CD4-positive, alpha-beta memory T cell (primary cell): ENCODE measurements at regions of chr13 and their contacts with region 1.

Region 1: DNA sequence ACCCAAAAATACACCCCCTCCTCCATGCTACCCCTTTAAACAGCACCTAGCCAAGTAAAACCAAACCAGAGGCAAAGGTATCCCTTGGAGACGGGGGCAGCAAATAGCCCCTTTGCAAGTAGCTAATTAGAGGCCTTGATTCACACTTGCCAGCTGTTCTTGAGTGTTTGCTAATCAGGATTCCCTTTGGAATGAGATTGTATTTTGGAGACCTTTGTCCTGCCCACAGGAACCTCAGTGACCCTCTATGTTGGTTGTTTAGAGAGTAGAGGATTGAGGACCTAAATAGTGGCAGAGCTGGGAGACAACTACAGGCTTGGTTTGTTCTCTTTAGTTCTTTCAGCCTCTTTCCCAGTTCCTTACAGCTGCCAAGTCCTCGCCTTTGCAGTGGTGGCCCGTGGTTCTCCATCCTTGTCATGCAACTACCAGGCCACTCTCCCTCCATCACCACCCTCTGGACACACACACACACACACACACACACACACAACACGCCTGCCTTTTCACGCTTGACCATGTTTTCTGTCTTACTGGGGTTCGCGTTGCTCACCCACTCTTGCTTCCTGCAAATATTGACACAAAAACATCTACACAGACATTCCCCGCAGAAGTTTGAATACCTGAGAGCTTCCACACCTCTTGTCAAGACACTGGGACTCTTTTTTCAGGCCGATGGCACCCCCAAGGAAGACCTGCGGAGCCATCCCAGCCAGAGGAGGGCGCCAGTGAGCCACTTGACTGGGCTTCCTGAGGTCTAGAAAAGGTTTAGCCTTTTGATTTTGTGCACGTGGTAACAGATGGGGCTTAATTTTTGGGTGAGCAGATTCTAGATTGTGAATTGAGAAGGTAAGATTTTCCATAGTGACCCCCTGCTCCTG is 80.0 kb upstream of the GPR183 start:
- DNase-seq: peak; percentile 78 to 84 (median 81)
- H3K4me3 ChIP-seq: no peak overlapping the region
- H3K4me3 Mint-ChIP-seq: peak overlapping the region; percentile 4 to 73 (median 54)
- H3K27ac ChIP-seq: peak overlapping the region; percentile 30
- H3K27ac Mint-ChIP-seq: peak overlapping the region; percentile 92 to 99 (median 96)
- H3K4me1 ChIP-seq: peaks cover 65% of the 10 kb centered on the region
- H3K4me1 Mint-ChIP-seq: peaks cover 46 to 70% (median 60%) of the 10 kb centered on the region in 4 donors
- H3K27me3 ChIP-seq: no peaks in the 10 kb centered on the region
- H3K27me3 Mint-ChIP-seq: no peaks in the 10 kb centered on the region

Region 2: GRCh38 chr13:99176309-99177276 is 210.6 kb before region 1 on chr13:
- CTCF ChIA-PET with region 1: interaction called, 16 read pairs
- POLR2A ChIA-PET with region 1: no interaction called
- intact Hi-C with region 1: loop called (anchors 5 kb)
- DNase-seq: peak; percentile 69 to 79 (median 75)
- H3K4me3 ChIP-seq: peak overlapping the region in 1 of 2 donors; percentile 19
- H3K4me3 Mint-ChIP-seq: peak overlapping the region in 7 of 8 donors; percentile 62 to 80 (median 71)
- H3K27ac ChIP-seq: no peak overlapping the region
- H3K27ac Mint-ChIP-seq: peak overlapping the region in 6 of 7 donors; percentile 37 to 81 (median 68)
- H3K4me1 ChIP-seq: peaks cover 44% of the 10 kb centered on the region
- H3K4me1 Mint-ChIP-seq: peaks cover 32 to 43% (median 36%) of the 10 kb centered on the region in 4 donors
- H3K27me3 ChIP-seq: no peaks in the 10 kb centered on the region
- H3K27me3 Mint-ChIP-seq: no peaks in the 10 kb centered on the region

Region 3: GRCh38 chr13:99191879-99192399 is 195.2 kb before region 1 on chr13:
- CTCF ChIA-PET with region 1: no interaction called
- POLR2A ChIA-PET with region 1: no interaction called
- intact Hi-C with region 1: no loop called
- DNase-seq: no peak
- H3K4me3 ChIP-seq: no peak overlapping the region
- H3K4me3 Mint-ChIP-seq: peak overlapping the region in 4 of 8 donors; percentile 1 to 54 (median 40)
- H3K27ac ChIP-seq: no peak overlapping the region
- H3K27ac Mint-ChIP-seq: peak overlapping the region in 6 of 7 donors; percentile 24 to 83 (median 59)
- H3K4me1 ChIP-seq: peaks cover 28% of the 10 kb centered on the region
- H3K4me1 Mint-ChIP-seq: peaks cover 16 to 36% (median 25%) of the 10 kb centered on the region in 4 donors
- H3K27me3 ChIP-seq: no peaks in the 10 kb centered on the region
- H3K27me3 Mint-ChIP-seq: no peaks in the 10 kb centered on the region

Region 4: DNA sequence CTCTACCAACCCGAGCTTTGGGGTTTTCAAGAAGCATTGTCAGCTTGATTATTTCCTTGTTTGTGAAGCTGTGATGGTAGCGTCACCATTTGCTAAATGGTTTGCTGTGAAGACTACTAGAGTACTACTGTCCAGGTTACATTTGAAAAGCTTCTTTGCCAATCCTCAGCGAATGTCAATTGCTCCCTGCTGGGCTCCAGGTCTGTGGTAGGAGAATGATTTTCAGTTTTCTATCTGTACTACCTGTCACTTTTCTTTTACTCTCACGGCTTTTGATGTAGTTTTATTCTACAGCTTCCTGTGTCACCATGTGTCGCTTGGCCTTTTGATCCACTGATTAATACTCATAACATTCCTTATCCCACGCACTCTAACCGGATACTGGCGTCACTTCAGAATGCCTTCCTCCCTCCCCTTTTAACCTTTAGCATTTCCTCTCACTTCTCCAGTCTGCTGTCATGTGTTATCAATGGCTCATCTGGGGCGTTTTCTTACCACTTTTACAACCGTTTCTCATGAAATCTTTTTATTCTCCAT is 72.4 kb before region 1 on chr13:
- CTCF ChIA-PET with region 1: interaction called, 142 read pairs
- POLR2A ChIA-PET with region 1: interaction called, 350 read pairs
- intact Hi-C with region 1: no loop called
- DNase-seq: peak; percentile 77 to 86 (median 83)
- H3K4me3 ChIP-seq: peak overlapping the region; percentile 26 to 46
- H3K4me3 Mint-ChIP-seq: peak overlapping the region; percentile 76 to 88 (median 80)
- H3K27ac ChIP-seq: peak overlapping the region; percentile 73
- H3K27ac Mint-ChIP-seq: peak overlapping the region; percentile 88 to 99 (median 98)
- H3K4me1 ChIP-seq: peaks cover 87% of the 10 kb centered on the region
- H3K4me1 Mint-ChIP-seq: peaks cover 61 to 86% (median 74%) of the 10 kb centered on the region in 4 donors
- H3K27me3 ChIP-seq: no peaks in the 10 kb centered on the region
- H3K27me3 Mint-ChIP-seq: no peaks in the 10 kb centered on the region

Region 5: DNA sequence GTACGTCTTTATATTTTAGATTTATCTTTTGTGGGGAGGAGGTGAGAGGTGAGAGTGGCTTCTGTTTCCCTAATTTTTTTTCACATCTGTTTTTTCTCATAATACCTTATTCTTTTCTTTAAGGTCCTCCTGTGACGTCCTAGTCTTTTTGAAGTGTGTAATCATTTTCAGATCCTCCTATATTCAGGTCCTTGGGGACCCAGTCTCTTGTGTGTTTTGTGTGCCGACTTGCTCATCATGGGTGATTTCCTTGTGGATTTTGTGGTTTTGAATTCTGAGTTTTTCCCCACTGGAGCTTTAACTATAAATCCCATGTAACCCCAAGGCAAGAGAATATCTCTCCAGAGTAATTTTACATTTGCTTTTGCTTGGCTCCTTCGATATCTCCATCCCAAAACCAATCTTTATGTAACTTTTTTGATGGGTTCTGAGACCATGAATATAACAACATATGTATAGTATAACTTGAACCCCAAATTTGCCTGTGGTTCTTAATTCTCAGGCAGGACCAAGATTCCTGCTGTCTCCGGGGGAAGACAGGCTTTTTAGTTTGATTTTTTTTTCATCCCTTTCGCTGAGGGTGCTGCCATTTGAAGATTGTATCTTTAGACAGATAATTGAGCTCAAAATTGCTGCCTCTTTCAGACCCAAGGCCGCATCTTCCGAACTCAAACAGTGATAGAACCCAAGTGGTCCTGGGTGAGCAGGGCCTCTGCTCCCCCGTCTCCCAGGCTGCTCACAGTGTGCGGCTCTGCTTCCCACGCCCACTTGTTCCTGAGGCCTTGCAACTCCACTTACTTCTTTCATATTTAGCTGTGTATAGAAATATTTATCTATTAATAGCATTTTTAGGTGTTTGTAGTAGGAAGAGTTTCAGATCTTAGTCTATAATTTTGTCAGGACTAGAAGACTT is 20.8 kb before region 1 on chr13:
- CTCF ChIA-PET with region 1: interaction called, 14 read pairs
- POLR2A ChIA-PET with region 1: interaction called, 112 read pairs
- intact Hi-C with region 1: no loop called
- DNase-seq: no peak
- H3K4me3 ChIP-seq: peak overlapping the region in 1 of 2 donors; percentile 22
- H3K4me3 Mint-ChIP-seq: peak overlapping the region; percentile 41 to 93 (median 78)
- H3K27ac ChIP-seq: peak overlapping the region; percentile 70
- H3K27ac Mint-ChIP-seq: peak overlapping the region; percentile 96 to 98 (median 97)
- H3K4me1 ChIP-seq: peaks cover 98% of the 10 kb centered on the region
- H3K4me1 Mint-ChIP-seq: peaks cover 73 to 98% (median 85%) of the 10 kb centered on the region in 4 donors
- H3K27me3 ChIP-seq: no peaks in the 10 kb centered on the region
- H3K27me3 Mint-ChIP-seq: no peaks in the 10 kb centered on the region

Region 6: GRCh38 chr13:99404005-99404755 is 17.0 kb after region 1 on chr13:
- CTCF ChIA-PET with region 1: interaction called, 11 read pairs
- POLR2A ChIA-PET with region 1: interaction called, 5 read pairs
- intact Hi-C with region 1: no loop called
- DNase-seq: no peak
- H3K4me3 ChIP-seq: no peak overlapping the region
- H3K4me3 Mint-ChIP-seq: peak overlapping the region in 6 of 8 donors; percentile 4 to 69 (median 34)
- H3K27ac ChIP-seq: no peak overlapping the region
- H3K27ac Mint-ChIP-seq: peak overlapping the region in 4 of 7 donors; percentile 30 to 70 (median 50)
- H3K4me1 ChIP-seq: peaks cover 7% of the 10 kb centered on the region
- H3K4me1 Mint-ChIP-seq: peaks cover 10 to 18% (median 14%) of the 10 kb centered on the region in 4 donors
- H3K27me3 ChIP-seq: no peaks in the 10 kb centered on the region
- H3K27me3 Mint-ChIP-seq: no peaks in the 10 kb centered on the region

Region 7: DNA sequence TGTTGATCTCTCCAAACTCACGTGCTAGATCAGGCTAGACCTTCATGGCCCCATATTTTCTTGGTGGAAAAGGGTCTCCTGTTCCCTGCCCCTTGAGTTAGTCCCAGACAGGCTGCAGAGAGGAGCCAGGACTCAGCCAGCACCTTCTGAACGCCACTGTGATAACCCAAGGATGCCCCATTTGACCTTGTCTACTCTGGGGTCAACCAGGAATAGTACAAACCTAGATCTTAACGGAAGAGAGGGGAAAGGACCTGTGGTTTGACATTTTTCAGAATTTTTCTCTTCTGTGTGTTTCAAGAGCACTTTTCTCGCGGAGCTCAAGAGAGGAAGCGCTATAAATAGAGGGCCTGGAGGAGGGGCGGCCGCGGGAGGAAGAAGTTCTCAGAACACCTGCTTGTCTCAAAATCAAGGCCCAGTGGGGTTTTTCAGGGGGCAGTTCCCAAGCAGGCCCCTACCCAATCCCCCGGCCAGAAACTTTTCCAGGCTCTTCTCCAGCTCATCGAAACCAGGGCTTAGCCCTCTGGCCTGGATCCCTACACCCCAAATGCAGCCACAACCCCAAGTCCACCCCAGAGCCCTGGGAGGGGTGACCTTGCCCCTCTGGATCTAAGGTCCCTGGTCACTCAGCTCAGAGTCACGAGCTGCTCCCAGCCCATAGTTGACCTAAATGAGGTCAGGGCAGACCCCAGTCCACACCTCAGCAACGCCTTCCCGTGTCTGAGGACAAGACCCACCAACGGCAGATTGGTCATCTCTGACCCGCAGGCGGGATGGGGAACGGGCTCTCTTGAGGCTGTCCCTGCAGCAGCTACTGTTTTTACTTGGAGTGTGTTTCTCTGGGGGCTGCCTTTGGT is 38.6 kb after region 1 on chr13:
- CTCF ChIA-PET with region 1: interaction called, 49 read pairs
- POLR2A ChIA-PET with region 1: interaction called, 9 read pairs
- intact Hi-C with region 1: no loop called
- DNase-seq: peak; percentile 41 to 67 (median 49)
- H3K4me3 ChIP-seq: peak overlapping the region; percentile 14 to 34
- H3K4me3 Mint-ChIP-seq: peak overlapping the region; percentile 23 to 88 (median 82)
- H3K27ac ChIP-seq: peak overlapping the region; percentile 60
- H3K27ac Mint-ChIP-seq: peak overlapping the region; percentile 90 to 96 (median 93)
- H3K4me1 ChIP-seq: peaks cover 42% of the 10 kb centered on the region
- H3K4me1 Mint-ChIP-seq: peaks cover 29 to 59% (median 44%) of the 10 kb centered on the region in 4 donors
- H3K27me3 ChIP-seq: no peaks in the 10 kb centered on the region
- H3K27me3 Mint-ChIP-seq: no peaks in the 10 kb centered on the region